Activated CD8-positive, alpha-beta T cell treated with anti-CD3 and anti-CD28 coated beads, Interleukin-2, amount 10 ng/mL, durations not matched to agents 7 days and 5 days (primary cell): ENCODE measurements at regions of chr5 and their contacts with region 1.

Region 1: GRCh38 chr5:177403792-177404640 is 3.6 kb upstream of the PFN3 start:
- DNase-seq: peak; percentile 89
- ATAC-seq: peak; percentile 92
- H3K4me3 Mint-ChIP-seq: peak overlapping the region; percentile 78
- H3K27ac Mint-ChIP-seq: peak overlapping the region; percentile 74
- H3K4me1 Mint-ChIP-seq: peaks cover 48% of the 10 kb centered on the region
- H3K27me3 Mint-ChIP-seq: peaks cover 21% of the 10 kb centered on the region

Region 2: DNA sequence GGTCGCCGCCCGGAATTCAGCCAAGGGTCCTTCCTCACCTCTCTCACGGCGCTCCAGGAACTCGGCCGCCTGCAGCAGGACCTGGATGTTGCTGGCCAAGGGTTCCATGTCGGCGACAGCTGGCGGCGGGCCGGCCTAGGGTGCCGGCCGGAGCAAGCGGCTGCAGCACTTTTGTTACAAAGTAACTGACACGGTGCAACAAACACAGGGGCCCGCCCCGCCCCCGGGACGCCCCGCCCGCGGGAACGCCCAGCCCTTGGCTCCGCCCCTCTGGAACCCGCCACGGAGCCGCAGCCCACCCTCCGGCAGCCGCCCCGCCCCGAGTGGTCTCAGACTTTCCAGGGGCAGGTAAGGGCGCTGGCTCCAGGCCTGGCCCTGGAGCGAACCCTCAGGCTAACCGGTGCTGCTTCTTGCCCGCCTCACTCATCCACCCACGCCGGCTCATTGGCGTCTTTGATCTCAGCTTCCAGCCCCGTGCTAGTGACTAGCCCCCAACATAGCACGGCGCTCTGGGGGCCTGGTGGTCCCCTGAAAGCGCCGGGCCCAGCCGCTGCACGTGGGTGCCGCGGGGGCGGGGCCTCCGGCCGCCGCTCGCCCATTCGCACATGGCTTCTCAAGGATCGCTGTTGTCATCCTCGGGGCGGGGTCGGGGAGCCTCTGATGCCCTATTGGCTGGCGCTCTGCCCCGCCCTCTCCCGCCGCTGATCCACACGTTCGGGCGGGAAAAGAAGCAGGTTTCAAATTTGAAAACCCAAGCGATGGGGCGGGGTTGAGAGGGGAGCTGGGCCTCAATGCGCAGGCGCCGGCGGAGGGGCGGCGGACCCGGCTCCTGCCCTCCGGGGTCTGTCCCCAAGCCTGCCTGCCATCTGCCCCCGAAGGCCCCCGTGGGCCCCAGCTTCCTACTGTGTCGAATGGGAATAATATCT is 92.0 kb before region 1 on chr5 and contains the start of gene MXD3:
- CTCF ChIA-PET with region 1: interaction called, 25 read pairs
- POLR2A ChIA-PET with region 1: no interaction called
- DNase-seq: peak; percentile 99
- ATAC-seq: peak; percentile 87
- H3K4me3 Mint-ChIP-seq: peak within 1 kb of the TSS; percentile 95
- H3K27ac Mint-ChIP-seq: peak within 1 kb of the TSS; percentile 93
- H3K4me1 Mint-ChIP-seq: peaks cover 55% of the 10 kb centered on the region
- H3K27me3 Mint-ChIP-seq: no peaks in the 10 kb centered on the region
- total RNA-seq, gene MXD3: 93.2 to 96.9 TPM

Region 3: DNA sequence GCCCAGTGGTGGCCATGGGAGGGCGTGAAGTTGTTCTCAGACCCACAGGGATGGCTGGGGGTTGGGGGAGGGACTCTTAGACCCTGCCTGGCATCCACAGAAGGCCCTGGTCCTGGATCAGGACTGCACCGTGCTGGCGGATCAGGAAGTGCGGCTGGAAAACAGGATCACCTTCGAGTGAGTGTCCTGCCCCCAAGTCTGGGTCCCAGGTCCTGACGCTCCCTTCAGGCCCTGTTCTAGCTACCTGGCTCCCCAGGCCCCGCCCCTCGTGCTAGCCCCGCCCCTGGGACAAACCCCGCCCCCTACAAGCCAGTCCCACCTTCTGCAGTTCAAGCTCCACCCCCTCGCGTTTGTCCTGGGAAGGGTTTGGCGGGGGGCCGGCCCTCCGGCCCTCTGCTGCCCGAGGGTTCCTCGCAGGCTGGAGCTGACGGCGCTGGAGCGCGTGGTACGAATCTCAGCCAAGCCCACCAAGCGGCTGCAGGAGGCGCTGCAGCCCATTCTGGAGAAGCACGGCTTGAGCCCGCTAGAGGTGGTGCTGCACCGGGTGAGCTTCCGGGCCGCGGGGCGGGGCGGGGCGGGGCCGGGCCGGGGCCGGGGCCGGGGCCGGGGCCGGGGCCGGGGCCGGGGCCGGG is 33.4 kb before region 1 on chr5:
- CTCF ChIA-PET with region 1: interaction called, 48 read pairs
- POLR2A ChIA-PET with region 1: no interaction called
- DNase-seq: peak; percentile 63
- ATAC-seq: peak; percentile 62
- H3K4me3 Mint-ChIP-seq: peak overlapping the region; percentile 31
- H3K27ac Mint-ChIP-seq: no peak overlapping the region
- H3K4me1 Mint-ChIP-seq: peaks cover 70% of the 10 kb centered on the region
- H3K27me3 Mint-ChIP-seq: no peaks in the 10 kb centered on the region

Region 4: DNA sequence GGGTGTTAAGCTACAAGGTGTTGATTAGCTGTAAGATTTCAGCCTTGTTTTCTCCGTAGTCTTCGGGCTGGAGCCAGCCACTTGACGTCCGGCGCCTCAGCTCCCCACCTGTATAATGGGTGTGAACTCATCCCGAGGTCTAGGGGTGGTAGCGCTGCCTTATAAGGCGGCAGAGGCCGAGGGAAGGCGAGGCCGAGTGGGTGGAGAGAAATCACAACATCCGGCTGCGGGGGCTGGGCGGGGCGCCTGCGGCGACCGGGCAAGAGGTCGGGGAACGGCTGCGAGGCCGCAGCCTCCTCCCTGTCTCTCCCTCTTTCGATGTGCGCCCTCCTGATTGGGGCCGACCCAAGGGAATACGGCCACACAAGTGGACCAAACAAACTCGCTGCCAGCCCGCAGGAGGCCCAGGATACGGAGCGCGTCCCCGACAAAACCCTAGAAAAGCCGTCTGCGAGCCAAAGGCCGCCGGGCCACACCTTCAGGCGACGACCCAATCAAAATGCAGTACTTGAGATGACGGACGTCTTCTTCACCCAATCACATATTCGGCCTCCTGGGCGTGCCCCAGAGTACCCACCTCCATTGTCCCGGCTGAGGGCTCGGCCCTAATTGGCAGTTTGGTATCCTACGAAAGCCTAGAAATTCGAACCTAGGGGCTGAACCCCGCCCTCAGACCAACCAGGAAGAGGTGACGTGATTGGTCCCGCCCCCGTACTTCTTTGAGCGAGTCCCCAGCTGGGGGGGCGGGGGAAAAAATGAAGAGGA is 22.0 kb after region 1 on chr5:
- CTCF ChIA-PET with region 1: interaction called, 252 read pairs
- POLR2A ChIA-PET with region 1: interaction called, 32 read pairs
- DNase-seq: peak; percentile 100
- ATAC-seq: peak; percentile 86
- H3K4me3 Mint-ChIP-seq: peak overlapping the region; percentile 91
- H3K27ac Mint-ChIP-seq: peak overlapping the region; percentile 93
- H3K4me1 Mint-ChIP-seq: peaks cover 52% of the 10 kb centered on the region
- H3K27me3 Mint-ChIP-seq: no peaks in the 10 kb centered on the region

Region 5: DNA sequence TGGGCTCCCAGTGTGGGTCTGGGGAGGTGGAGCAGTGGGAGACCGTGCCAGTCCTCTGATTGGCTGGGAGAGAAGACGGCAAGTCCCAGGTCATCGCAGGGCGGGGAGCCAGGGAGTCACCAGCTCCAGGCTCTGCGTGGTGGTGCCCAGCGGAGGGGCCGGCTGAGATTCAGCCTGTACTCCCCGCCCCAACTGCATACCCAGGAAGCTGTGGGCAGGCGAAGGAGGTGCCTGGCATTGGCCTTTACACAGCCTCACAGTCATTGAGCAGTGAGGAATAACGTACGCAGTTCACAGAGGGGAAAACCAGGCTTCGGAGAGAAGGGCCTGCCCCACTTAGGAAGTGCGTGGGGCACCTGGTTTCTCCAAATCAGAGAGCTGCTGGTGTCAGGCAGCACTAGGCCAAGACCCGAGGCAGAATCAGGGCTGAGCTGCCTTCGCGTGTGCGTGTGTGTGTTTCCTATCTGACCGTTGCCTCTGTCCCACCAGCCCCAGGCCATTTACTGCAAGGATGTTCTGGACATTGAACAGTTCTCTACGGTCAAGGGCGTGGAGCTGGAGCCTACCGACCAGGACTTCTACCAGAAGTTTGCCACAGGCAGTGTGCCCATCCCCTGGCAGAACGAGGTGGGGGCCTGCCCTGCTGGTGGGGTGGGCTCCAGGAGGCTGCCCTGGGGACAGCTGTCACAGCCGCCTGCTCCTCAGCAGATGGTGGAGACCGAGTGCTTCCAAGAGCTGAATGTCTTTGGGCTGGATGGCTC is 36.4 kb after region 1 on chr5:
- CTCF ChIA-PET with region 1: interaction called, 177 read pairs
- POLR2A ChIA-PET with region 1: interaction called, 9 read pairs
- DNase-seq: no peak
- ATAC-seq: no peak
- H3K4me3 Mint-ChIP-seq: no peak overlapping the region
- H3K27ac Mint-ChIP-seq: peak overlapping the region; percentile 40
- H3K4me1 Mint-ChIP-seq: peaks cover 59% of the 10 kb centered on the region
- H3K27me3 Mint-ChIP-seq: no peaks in the 10 kb centered on the region

Region 6: GRCh38 chr5:177462021-177462670 is 58.1 kb after region 1 on chr5:
- CTCF ChIA-PET with region 1: interaction called, 337 read pairs
- POLR2A ChIA-PET with region 1: interaction called, 54 read pairs
- DNase-seq: peak; percentile 52
- ATAC-seq: peak; percentile 24
- H3K4me3 Mint-ChIP-seq: peak overlapping the region; percentile 56
- H3K27ac Mint-ChIP-seq: peak overlapping the region; percentile 93
- H3K4me1 Mint-ChIP-seq: peaks cover 32% of the 10 kb centered on the region
- H3K27me3 Mint-ChIP-seq: no peaks in the 10 kb centered on the region

Region 7: GRCh38 chr5:177497292-177498033 is 93.4 kb after region 1 on chr5 and contains the start of gene PDLIM7:
- CTCF ChIA-PET with region 1: interaction called, 59 read pairs
- POLR2A ChIA-PET with region 1: no interaction called
- DNase-seq: peak; percentile 97
- ATAC-seq: peak; percentile 91
- H3K4me3 Mint-ChIP-seq: peak within 1 kb of the TSS; percentile 82
- H3K27ac Mint-ChIP-seq: peak within 1 kb of the TSS; percentile 67
- H3K4me1 Mint-ChIP-seq: peaks cover 61% of the 10 kb centered on the region
- H3K27me3 Mint-ChIP-seq: peaks cover 18% of the 10 kb centered on the region
- total RNA-seq, gene PDLIM7: 62.5 to 67.3 TPM